ENCODE measurements at regions of chr12 and their contacts with region 1.

Region 1: DNA sequence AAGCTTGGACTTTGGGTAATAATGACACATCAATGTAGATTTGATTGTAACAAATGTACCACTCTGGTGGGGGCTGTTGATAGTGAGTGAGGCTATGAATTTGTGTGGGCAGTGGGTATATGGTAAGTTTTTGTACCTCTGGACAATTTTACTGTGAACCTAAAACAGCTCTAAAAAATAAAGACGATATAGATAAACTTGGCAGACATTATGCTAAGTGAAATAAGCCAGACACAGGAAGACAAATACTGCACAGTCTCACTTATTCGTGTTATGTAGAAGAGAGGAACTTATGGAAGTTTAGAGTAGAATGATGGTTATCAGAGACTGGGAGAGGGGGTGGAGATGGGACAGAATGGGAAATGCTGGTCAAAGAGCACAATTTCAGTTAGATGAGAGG is 8.7 kb downstream of the KRT6C start:
- DNase-seq: no peak

Region 2: GRCh38 chr12:52164611-52165010 is 300.3 kb before region 1 on chr12:
- intact Hi-C with region 1: no loop called
- DNase-seq: no peak

Region 3: GRCh38 chr12:52423661-52424500 is 41.0 kb before region 1 on chr12:
- intact Hi-C with region 1: no loop called
- DNase-seq: no peak

Region 4: GRCh38 chr12:52480073-52480472 is 15.2 kb after region 1 on chr12:
- intact Hi-C with region 1: no loop called
- DNase-seq: no peak

Region 5: GRCh38 chr12:52561880-52562449 is 97.1 kb after region 1 on chr12:
- intact Hi-C with region 1: loop called in 1 of 2 experiments (anchors 5 kb)
- DNase-seq: no peak

Region 6: GRCh38 chr12:52847335-52848102 is 382.6 kb after region 1 on chr12:
- intact Hi-C with region 1: no loop called
- DNase-seq: no peak

Measured in posterior vena cava (tissue), 2 donors.